CD4-positive, alpha-beta T cell (primary cell): ENCODE measurements at regions of chr12 and their contacts with region 1.

Region 1: GRCh38 chr12:57904848-57905811 is 36.2 kb upstream of the ATP23 start:
- DNase-seq: peak; percentile 73 to 92 (median 80)
- ATAC-seq: peak; percentile 100
- H3K4me3 ChIP-seq: no peak overlapping the region
- H3K4me3 Mint-ChIP-seq: no peak overlapping the region
- H3K27ac ChIP-seq: no peak overlapping the region
- H3K27ac Mint-ChIP-seq: no peak overlapping the region
- H3K4me1 ChIP-seq: peaks cover 11% of the 10 kb centered on the region
- H3K4me1 Mint-ChIP-seq: peaks cover 12% of the 10 kb centered on the region
- H3K27me3 ChIP-seq: no peaks in the 10 kb centered on the region
- H3K27me3 Mint-ChIP-seq: peaks cover 14% of the 10 kb centered on the region
- CTCF ChIP-seq: peak; percentile 100

Region 2: DNA sequence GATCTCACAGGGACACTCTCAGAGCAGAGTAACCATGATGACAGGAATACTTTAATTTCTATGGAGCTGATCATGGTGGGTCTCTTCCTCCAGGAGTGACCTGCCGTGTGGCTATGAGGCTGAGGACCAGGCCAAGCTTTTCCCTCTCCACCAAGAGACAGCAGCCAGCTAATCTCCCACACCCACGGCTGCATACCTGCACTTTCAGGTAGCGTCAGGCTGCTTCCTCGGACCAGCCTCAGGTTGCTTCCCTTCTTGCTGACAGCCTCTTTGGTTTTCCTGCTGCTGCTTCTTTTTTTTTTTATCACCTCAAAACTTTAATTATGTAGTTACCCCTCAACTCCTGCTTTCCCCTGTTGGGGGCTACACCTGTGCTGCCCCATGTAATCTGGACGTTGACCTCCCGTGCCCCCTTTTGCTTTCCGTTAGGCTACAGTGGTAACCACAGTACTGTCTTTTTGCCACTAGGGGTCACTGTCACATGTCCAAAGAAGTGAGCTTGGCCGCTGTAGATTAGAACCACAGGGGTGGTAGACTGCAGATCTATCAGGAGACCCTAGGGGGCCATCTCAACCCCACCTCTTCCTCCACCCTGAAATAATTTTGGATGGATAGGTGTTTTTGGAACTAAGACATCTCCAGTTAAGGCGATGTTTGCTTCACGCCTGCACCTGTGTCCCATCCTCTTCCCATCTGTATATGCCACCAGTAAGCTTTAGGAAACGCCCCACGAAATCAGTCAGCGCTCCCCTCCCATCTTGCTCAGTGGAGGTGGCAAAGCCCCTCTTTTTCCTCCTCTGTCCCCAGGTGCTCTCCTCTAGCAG is 321.9 kb before region 1 on chr12:
- CTCF ChIA-PET with region 1: no interaction called
- POLR2A ChIA-PET with region 1: no interaction called
- intact Hi-C with region 1: loop called (anchors 2 to 5 kb)
- DNase-seq: peak; percentile 33 to 89 (median 56)
- ATAC-seq: peak; percentile 100
- H3K4me3 ChIP-seq: no peak overlapping the region
- H3K4me3 Mint-ChIP-seq: no peak overlapping the region
- H3K27ac ChIP-seq: no peak overlapping the region
- H3K27ac Mint-ChIP-seq: no peak overlapping the region
- H3K4me1 ChIP-seq: peaks cover 8% of the 10 kb centered on the region
- H3K4me1 Mint-ChIP-seq: no peaks in the 10 kb centered on the region
- H3K27me3 ChIP-seq: peaks cover 0 to 10% of the 10 kb centered on the region in 2 experiments
- H3K27me3 Mint-ChIP-seq: peaks cover 15% of the 10 kb centered on the region
- CTCF ChIP-seq: peak; percentile 96

Region 3: GRCh38 chr12:57782608-57783465 is 122.3 kb before region 1 on chr12 and contains the start of gene TSFM:
- CTCF ChIA-PET with region 1: interaction called, 3 read pairs
- POLR2A ChIA-PET with region 1: no interaction called
- intact Hi-C with region 1: loop called (anchors 1 to 5 kb)
- DNase-seq: peak; percentile 93 to 99 (median 98)
- ATAC-seq: peak; percentile 93
- H3K4me3 ChIP-seq: peak within 1 kb of the TSS; percentile 89
- H3K4me3 Mint-ChIP-seq: peak within 1 kb of the TSS; percentile 100
- H3K27ac ChIP-seq: peak within 1 kb of the TSS; percentile 51 to 78
- H3K27ac Mint-ChIP-seq: peak within 1 kb of the TSS; percentile 100
- H3K4me1 ChIP-seq: peaks cover 58% of the 10 kb centered on the region
- H3K4me1 Mint-ChIP-seq: peaks cover 47% of the 10 kb centered on the region
- H3K27me3 ChIP-seq: no peaks in the 10 kb centered on the region
- H3K27me3 Mint-ChIP-seq: no peaks in the 10 kb centered on the region
- CTCF ChIP-seq: peak; percentile 90
- total RNA-seq, gene TSFM: 25.8 to 26.9 TPM

Region 4: GRCh38 chr12:57815177-57816000 is 89.7 kb before region 1 on chr12:
- CTCF ChIA-PET with region 1: interaction called, 10 read pairs
- POLR2A ChIA-PET with region 1: interaction called, 3 read pairs
- intact Hi-C with region 1: no loop called
- DNase-seq: peak in 1 of 14 experiments; percentile 28
- ATAC-seq: no peak
- H3K4me3 ChIP-seq: no peak overlapping the region
- H3K4me3 Mint-ChIP-seq: no peak overlapping the region
- H3K27ac ChIP-seq: no peak overlapping the region
- H3K27ac Mint-ChIP-seq: no peak overlapping the region
- H3K4me1 ChIP-seq: no peaks in the 10 kb centered on the region
- H3K4me1 Mint-ChIP-seq: peaks cover 7% of the 10 kb centered on the region
- H3K27me3 ChIP-seq: no peaks in the 10 kb centered on the region
- H3K27me3 Mint-ChIP-seq: no peaks in the 10 kb centered on the region
- CTCF ChIP-seq: no peak

Region 5: GRCh38 chr12:57836442-57837375 is 68.4 kb before region 1 on chr12:
- CTCF ChIA-PET with region 1: interaction called, 11 read pairs
- POLR2A ChIA-PET with region 1: interaction called, 4 read pairs
- intact Hi-C with region 1: loop called (anchors 1 kb)
- DNase-seq: peak in 6 of 14 experiments; percentile 26 to 73 (median 54)
- ATAC-seq: peak; percentile 15
- H3K4me3 ChIP-seq: peak overlapping the region; percentile 31
- H3K4me3 Mint-ChIP-seq: peak overlapping the region; percentile 74
- H3K27ac ChIP-seq: peak overlapping the region; percentile 71 to 79
- H3K27ac Mint-ChIP-seq: peak overlapping the region; percentile 92
- H3K4me1 ChIP-seq: peaks cover 99% of the 10 kb centered on the region
- H3K4me1 Mint-ChIP-seq: peaks cover 98% of the 10 kb centered on the region
- H3K27me3 ChIP-seq: no peaks in the 10 kb centered on the region
- H3K27me3 Mint-ChIP-seq: no peaks in the 10 kb centered on the region
- CTCF ChIP-seq: no peak

Region 6: GRCh38 chr12:57934819-57935218 is 29.7 kb after region 1 on chr12:
- CTCF ChIA-PET with region 1: no interaction called
- POLR2A ChIA-PET with region 1: no interaction called
- intact Hi-C with region 1: loop called in 1 of 2 experiments (anchors 1 kb)
- DNase-seq: no peak
- ATAC-seq: no peak
- H3K4me3 ChIP-seq: no peak overlapping the region
- H3K4me3 Mint-ChIP-seq: peak overlapping the region; percentile 95
- H3K27ac ChIP-seq: no peak overlapping the region
- H3K27ac Mint-ChIP-seq: peak overlapping the region; percentile 98
- H3K4me1 ChIP-seq: peaks cover 3% of the 10 kb centered on the region
- H3K4me1 Mint-ChIP-seq: peaks cover 26% of the 10 kb centered on the region
- H3K27me3 ChIP-seq: no peaks in the 10 kb centered on the region
- H3K27me3 Mint-ChIP-seq: no peaks in the 10 kb centered on the region
- CTCF ChIP-seq: no peak